ENCODE measurements at regions of chr20 and their contacts with region 1.

Region 1: GRCh38 chr20:35994994-35995453 is 26.6 kb downstream of the CNBD2 start:
- DNase-seq: peak; percentile 76
- CTCF ChIP-seq: peak; percentile 92

Region 2: DNA sequence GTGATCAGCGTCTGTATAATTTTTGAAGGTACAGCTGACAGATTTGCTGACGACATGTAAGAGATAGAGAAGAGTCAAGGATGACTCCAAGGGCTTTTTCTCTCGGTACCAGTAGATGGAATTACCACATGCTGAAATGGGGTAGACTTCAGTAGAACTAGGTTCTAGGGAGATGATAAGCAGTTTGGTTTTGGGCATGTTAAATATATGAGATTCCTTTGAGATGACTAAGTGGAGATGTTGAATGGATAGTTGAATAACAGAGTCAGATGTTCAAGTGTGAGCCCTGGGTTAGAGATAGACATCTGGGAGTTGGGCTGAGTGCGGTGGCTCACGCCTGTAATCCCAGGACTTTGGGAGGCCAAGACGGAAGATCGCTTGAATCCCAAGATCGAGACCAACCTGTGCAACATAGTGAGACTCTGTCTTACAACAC is 173.2 kb before region 1 on chr20:
- CTCF ChIA-PET with region 1: no interaction called
- POLR2A ChIA-PET with region 1: no interaction called
- DNase-seq: no peak
- CTCF ChIP-seq: no peak

Region 3: DNA sequence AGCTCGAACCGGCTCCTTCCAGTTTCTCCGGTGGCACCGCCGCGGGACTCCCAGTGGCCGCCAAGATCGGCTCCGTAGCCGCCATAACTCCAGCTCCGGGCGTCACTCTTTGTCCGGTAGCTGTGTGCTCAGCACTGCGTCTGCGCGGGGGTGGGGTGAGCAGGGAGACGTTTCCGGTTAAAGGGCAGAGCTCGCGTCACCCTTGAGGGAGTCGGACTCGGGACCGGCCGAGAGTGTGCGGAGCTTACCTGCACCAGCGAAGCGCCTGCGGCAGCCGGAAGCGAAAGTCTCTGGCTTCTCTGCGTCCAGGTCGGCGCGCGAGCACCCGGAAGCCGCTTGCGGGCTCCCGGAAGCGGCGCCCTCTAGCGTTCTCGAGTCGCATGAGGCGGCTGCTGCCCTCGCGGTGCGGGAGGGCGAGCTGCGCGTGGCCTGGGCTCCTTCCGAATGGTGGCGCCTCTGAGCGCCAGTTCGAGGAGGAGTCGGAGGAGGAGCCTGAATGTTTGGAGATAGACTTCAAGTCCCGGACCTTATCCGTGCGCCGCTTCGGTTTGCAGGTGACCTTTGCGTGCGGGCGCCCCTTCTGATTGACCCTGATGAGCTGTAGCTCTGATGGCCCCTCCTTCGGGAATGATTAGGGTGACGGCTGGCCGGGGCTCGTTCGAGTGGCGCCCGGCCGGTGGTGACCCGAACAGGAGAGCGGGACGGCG is 40.7 kb before region 1 on chr20 and contains the start of gene SCAND1:
- CTCF ChIA-PET with region 1: interaction called, 23 read pairs
- POLR2A ChIA-PET with region 1: no interaction called
- DNase-seq: peak; percentile 96
- CTCF ChIP-seq: peak; percentile 100

Region 4: DNA sequence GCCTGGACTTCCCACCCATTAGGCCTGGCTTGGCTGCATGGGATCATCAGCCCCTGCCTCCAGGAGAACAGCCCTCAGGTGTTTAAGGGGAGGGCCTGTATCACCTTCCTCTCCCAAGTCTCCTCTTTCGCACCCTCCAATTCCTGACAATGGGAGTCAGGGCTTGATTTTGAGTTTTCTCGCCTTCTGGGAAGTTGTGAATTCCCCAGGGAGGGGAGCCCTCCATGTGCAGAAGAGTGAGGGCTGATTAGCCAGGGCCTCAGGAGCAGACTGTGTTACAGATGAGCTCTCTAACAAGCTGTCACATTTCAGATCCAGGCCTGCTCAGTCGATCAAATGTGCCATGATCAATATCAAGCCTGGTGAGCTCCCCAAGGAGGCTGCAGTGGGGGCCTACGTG is 15.8 kb after region 1 on chr20:
- CTCF ChIA-PET with region 1: interaction called, 56 read pairs
- POLR2A ChIA-PET with region 1: no interaction called
- DNase-seq: no peak
- CTCF ChIP-seq: no peak

Region 5: DNA sequence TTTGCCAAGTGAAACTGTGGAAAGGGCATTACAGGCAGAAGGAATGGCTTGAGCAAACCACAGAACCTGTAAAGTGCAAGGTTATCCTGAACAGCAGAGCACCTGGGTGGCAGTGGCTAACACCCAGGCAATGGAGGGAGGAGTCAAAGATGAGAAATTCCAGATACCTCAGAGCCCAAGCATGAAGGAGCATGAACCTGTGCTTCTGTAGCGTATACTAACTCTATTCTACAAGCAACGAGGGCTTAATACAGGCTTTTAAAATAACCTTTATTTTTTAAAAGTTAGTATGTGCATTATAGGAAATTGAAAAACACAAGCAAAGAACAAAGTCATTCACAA is 50.3 kb after region 1 on chr20:
- CTCF ChIA-PET with region 1: no interaction called
- POLR2A ChIA-PET with region 1: no interaction called
- DNase-seq: no peak
- CTCF ChIP-seq: no peak

Region 6: GRCh38 chr20:36113566-36114250 is 118.7 kb after region 1 on chr20:
- CTCF ChIA-PET with region 1: interaction called, 13 read pairs
- POLR2A ChIA-PET with region 1: interaction called, 4 read pairs
- DNase-seq: peak; percentile 59
- CTCF ChIP-seq: no peak

Region 7: DNA sequence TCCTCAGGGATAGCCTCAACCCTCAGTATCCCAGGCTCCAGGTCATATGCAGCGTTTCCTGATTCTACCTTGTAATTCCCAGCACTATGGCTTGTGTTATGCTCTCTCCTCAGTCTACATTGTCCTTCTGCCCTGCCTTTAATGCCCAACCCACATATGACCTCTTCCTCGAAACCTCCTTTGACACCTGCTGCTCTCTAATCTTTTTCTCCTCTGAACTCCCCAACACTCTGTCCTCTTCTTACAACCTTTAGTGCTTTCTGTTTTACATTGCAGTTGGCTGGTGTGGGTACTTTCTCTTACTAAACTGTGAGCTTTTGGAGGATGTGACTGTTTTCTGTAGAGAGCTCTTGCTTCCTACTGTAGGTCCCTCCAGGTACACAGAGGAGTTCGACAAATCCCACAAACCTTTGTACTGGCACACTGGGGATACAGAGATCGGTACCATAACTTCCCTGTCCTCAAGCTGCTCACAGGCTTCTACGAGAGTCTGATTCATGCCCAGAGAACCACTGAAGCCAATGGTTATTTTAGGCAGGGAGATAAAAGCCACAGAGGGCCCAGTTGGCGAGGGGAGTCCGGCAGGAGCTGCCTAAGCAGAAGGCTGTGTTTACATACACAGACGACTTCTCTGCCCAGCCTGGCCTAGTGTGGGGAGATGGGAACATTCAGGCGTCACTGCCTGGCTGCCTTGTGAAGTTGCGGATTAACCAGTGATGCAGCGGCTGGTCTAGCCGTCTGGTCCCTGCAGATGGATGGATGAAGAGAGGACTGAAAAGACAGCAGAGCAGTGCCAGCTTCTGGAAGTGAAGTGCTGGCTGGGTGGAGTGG is 151.1 kb after region 1 on chr20:
- CTCF ChIA-PET with region 1: interaction called, 495 read pairs
- POLR2A ChIA-PET with region 1: no interaction called
- DNase-seq: no peak
- CTCF ChIP-seq: no peak

Region 8: GRCh38 chr20:36199345-36200257 is 204.6 kb after region 1 on chr20:
- CTCF ChIA-PET with region 1: interaction called, 84 read pairs
- POLR2A ChIA-PET with region 1: no interaction called
- DNase-seq: peak; percentile 80
- CTCF ChIP-seq: peak; percentile 87

Measured in GM10248 (cell line).